Psoas muscle (tissue), 8 donors: ENCODE measurements at regions of chr11 and their contacts with region 1.

Region 1: GRCh38 chr11:75475767-75476650 is 43.0 kb upstream of the KLHL35 start:
- DNase-seq: peak; percentile 70 to 85
- ATAC-seq: peak; percentile 27 to 71 (median 51)
- H3K4me3 ChIP-seq: peak overlapping the region; percentile 7
- H3K27ac ChIP-seq: peak overlapping the region; percentile 86
- H3K4me1 ChIP-seq: peaks cover 44% of the 10 kb centered on the region
- H3K27me3 ChIP-seq: no peaks in the 10 kb centered on the region
- CTCF ChIP-seq: no peak

Region 2: GRCh38 chr11:75270896-75271418 is 205.1 kb before region 1 on chr11:
- intact Hi-C with region 1: no loop called
- DNase-seq: peak in 1 of 2 donors; percentile 23
- ATAC-seq: no peak
- H3K4me3 ChIP-seq: no peak overlapping the region
- H3K27ac ChIP-seq: no peak overlapping the region
- H3K4me1 ChIP-seq: no peaks in the 10 kb centered on the region
- H3K27me3 ChIP-seq: no peaks in the 10 kb centered on the region
- CTCF ChIP-seq: no peak

Region 3: GRCh38 chr11:75425422-75425821 is 50.6 kb before region 1 on chr11:
- intact Hi-C with region 1: no loop called
- DNase-seq: peak; percentile 11 to 45
- ATAC-seq: no peak
- H3K4me3 ChIP-seq: no peak overlapping the region
- H3K27ac ChIP-seq: no peak overlapping the region
- H3K4me1 ChIP-seq: no peaks in the 10 kb centered on the region
- H3K27me3 ChIP-seq: peaks cover 0 to 18% (median 3%) of the 10 kb centered on the region in 3 donors
- CTCF ChIP-seq: peak; percentile 6

Region 4: DNA sequence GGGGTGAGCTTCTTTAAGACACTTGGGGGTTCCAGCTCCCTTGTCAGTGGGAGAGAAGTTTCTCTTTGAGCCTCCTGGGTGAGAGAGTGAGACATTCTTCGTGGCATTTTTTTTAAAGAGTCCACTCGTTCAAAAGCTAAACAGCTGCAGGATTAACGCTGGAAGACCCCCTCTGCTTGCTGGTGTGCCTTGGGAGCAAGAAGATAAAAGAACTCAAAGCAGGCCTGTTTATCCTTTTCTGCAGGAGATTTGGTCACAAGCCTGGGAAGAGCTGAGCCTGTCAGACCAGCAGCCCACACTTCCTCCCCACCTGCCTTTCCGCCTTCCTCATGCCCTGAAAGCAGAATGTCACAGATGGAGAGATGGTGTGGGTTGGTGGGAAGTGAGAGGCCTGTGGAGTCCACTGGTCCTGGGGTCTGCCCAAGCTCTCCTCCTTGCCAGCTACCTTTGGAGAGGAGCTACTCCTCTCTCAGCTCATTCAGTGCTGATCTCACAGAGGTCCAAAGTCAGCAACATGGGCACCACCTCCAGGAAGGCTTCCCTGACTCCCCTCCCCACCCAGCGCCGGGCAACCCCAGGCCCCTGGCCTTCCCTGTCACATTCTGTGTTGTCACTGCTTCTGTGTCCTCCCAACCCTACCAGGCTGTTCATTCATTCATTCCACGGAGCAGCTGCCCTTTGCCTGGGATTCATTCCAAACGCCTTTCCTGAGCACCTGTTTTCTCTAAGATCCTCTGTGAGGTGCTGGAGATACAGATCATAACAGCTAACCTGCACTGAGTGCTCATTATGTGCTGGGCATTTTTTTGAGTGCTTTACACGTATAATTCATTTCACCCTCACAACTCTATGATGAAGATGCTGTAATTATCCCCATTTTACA is 43.0 kb after region 1 on chr11:
- intact Hi-C with region 1: loop called in 1 of 2 experiments (anchors 2 kb)
- DNase-seq: no peak
- ATAC-seq: peak; percentile 24 to 69 (median 34)
- H3K4me3 ChIP-seq: no peak overlapping the region
- H3K27ac ChIP-seq: peak overlapping the region; percentile 50
- H3K4me1 ChIP-seq: peaks cover 37% of the 10 kb centered on the region
- H3K27me3 ChIP-seq: no peaks in the 10 kb centered on the region
- CTCF ChIP-seq: no peak

Region 5: DNA sequence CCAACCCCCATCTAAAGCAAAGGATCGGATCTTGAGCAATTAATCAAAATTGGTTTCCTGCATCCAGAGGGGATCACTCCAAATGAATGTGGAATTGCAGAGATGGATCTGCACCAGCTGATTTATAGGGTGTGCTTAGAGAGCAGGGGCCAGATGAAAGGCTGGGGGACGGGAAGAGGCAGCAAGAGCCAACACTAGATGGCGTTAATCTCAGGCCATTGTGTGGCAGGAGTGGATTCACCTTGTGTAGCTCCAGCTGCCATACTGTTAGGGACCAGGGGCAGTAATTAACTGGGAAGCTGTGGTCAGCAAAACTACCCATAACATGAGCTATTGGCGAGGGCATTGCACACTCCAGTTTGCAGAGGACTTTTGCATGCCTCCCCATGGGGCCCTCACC is 121.6 kb after region 1 on chr11:
- intact Hi-C with region 1: no loop called
- DNase-seq: no peak
- ATAC-seq: no peak
- H3K4me3 ChIP-seq: no peak overlapping the region
- H3K27ac ChIP-seq: no peak overlapping the region
- H3K4me1 ChIP-seq: no peaks in the 10 kb centered on the region
- H3K27me3 ChIP-seq: no peaks in the 10 kb centered on the region
- CTCF ChIP-seq: no peak